ENCODE measurements at regions of chr1 and their contacts with region 1.

Region 1: GRCh38 chr1:205658943-205659581 is 21.2 kb downstream of the SLC45A3 start:
- DNase-seq: peak; percentile 86
- ATAC-seq: peak; percentile 97
- H3K4me3 Mint-ChIP-seq: no peak overlapping the region
- H3K27ac Mint-ChIP-seq: no peak overlapping the region
- H3K4me1 Mint-ChIP-seq: no peaks in the 10 kb centered on the region
- H3K27me3 Mint-ChIP-seq: no peaks in the 10 kb centered on the region
- CTCF ChIP-seq: peak; percentile 90

Region 2: GRCh38 chr1:205528887-205529825 is 129.9 kb before region 1 on chr1:
- CTCF ChIA-PET with region 1: interaction called, 105 read pairs
- POLR2A ChIA-PET with region 1: no interaction called
- intact Hi-C with region 1: loop called (anchors 2 kb)
- DNase-seq: peak; percentile 90
- ATAC-seq: peak; percentile 92
- H3K4me3 Mint-ChIP-seq: peak overlapping the region; percentile 57
- H3K27ac Mint-ChIP-seq: no peak overlapping the region
- H3K4me1 Mint-ChIP-seq: peaks cover 5% of the 10 kb centered on the region
- H3K27me3 Mint-ChIP-seq: no peaks in the 10 kb centered on the region
- CTCF ChIP-seq: peak; percentile 98

Region 3: GRCh38 chr1:205568469-205569361 is 90.3 kb before region 1 on chr1:
- CTCF ChIA-PET with region 1: interaction called, 15 read pairs
- POLR2A ChIA-PET with region 1: no interaction called
- intact Hi-C with region 1: no loop called
- DNase-seq: peak; percentile 25
- ATAC-seq: peak; percentile 60
- H3K4me3 Mint-ChIP-seq: peak overlapping the region; percentile 51
- H3K27ac Mint-ChIP-seq: no peak overlapping the region
- H3K4me1 Mint-ChIP-seq: peaks cover 2% of the 10 kb centered on the region
- H3K27me3 Mint-ChIP-seq: peaks cover 43% of the 10 kb centered on the region
- CTCF ChIP-seq: no peak

Region 4: DNA sequence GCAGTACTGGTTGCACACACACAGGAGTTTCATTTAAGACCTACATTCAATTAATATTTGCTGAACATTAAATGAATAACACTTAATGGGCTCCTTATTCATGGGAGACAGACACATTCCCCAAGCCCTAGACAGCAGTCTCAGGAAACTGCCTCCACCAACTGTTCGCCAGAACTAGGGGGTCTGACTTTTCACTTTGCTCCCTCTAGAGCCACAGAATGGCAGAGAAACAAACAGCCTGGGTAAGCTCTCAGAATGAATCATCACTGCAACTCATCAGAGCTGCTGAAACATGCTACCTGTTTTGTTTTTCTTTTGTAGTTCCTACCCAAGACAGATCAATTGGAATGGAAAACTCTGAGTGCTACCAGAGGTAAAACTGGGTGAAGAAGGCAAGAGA is 59.0 kb before region 1 on chr1:
- CTCF ChIA-PET with region 1: interaction called, 396 read pairs
- POLR2A ChIA-PET with region 1: no interaction called
- intact Hi-C with region 1: no loop called
- DNase-seq: peak; percentile 39
- ATAC-seq: peak; percentile 93
- H3K4me3 Mint-ChIP-seq: no peak overlapping the region
- H3K27ac Mint-ChIP-seq: peak overlapping the region; percentile 85
- H3K4me1 Mint-ChIP-seq: peaks cover 40% of the 10 kb centered on the region
- H3K27me3 Mint-ChIP-seq: no peaks in the 10 kb centered on the region
- CTCF ChIP-seq: peak; percentile 52

Region 5: GRCh38 chr1:205689479-205689878 is 30.4 kb after region 1 on chr1:
- CTCF ChIA-PET with region 1: interaction called, 22 read pairs
- POLR2A ChIA-PET with region 1: interaction called, 3 read pairs
- intact Hi-C with region 1: no loop called
- DNase-seq: no peak
- ATAC-seq: no peak
- H3K4me3 Mint-ChIP-seq: no peak overlapping the region
- H3K27ac Mint-ChIP-seq: no peak overlapping the region
- H3K4me1 Mint-ChIP-seq: no peaks in the 10 kb centered on the region
- H3K27me3 Mint-ChIP-seq: peaks cover 11% of the 10 kb centered on the region
- CTCF ChIP-seq: no peak

Region 6: DNA sequence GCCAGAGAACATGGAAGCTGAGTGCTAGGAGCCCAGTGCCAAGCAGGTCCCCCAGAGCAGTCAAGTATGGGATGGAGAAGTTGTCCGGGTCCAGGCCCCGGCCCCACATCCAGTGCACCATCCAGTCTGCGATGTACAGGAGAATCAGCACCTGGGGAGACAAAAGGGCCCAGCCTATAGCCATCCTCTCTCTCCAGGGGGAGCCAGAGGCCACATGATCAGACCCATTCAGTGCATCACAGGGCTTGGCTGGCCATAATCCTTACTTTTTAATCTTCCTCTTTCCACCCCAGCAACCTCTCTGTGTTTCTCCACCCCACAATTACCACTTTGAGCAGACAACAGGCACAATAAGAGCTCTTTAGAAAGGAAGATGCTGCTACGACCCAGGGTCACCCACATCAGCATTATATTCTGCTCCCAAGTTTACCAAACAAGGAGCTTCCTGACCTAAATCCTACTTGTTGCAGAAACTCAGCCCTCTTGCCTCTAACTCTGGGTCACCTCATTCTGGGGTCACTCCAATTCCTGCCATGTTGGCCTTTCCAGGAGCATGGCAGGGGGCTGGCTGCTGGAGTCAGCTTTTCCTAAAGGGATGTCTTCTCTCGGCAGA is 132.6 kb after region 1 on chr1:
- CTCF ChIA-PET with region 1: interaction called, 10 read pairs
- POLR2A ChIA-PET with region 1: no interaction called
- intact Hi-C with region 1: no loop called
- DNase-seq: peak; percentile 77
- ATAC-seq: peak; percentile 95
- H3K4me3 Mint-ChIP-seq: no peak overlapping the region
- H3K27ac Mint-ChIP-seq: no peak overlapping the region
- H3K4me1 Mint-ChIP-seq: no peaks in the 10 kb centered on the region
- H3K27me3 Mint-ChIP-seq: no peaks in the 10 kb centered on the region
- CTCF ChIP-seq: peak; percentile 87

Measured in activated CD8-positive, alpha-beta T cell treated with anti-CD3 and anti-CD28 coated beads for 36 hours (primary cell).